Left colon (tissue), 2 donors: ENCODE measurements at regions of chr16 and their contacts with region 1.

Region 1: GRCh38 chr16:80639641-80640040 is 98.8 kb downstream of the DYNLRB2 start:
- DNase-seq: no peak
- ATAC-seq: no peak

Region 2: DNA sequence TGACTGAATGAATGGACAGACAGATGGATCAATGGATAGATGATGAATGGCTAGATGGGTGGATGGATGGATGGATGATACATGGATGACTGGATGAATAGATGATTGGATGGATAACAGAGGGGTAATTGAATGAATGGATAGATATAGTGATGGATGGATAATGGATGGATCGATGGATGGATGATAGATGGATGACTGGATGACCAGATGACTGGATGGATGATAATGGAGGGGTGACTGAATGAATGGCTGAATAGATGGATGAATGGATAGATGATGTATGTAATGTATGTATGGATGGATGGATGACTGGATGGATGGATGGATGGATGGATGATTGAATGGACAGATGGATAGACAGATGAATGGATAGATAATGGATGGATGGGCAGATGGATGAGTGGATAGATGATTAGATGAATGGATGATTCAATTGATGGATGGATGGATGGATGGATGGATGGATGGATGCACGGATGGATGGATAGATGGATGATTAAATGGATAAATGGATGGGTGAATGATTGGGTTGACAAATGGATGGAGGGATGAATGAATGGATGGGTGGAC is 77.0 kb after region 1 on chr16:
- intact Hi-C with region 1: loop called in 1 of 2 experiments (anchors 1 kb)
- DNase-seq: no peak
- ATAC-seq: no peak